ENCODE measurements at regions of chr5 and their contacts with region 1.

Region 1: GRCh38 chr5:126776497-126777256 is at the start of gene LMNB1:
- DNase-seq: peak; percentile 96
- ATAC-seq: peak; percentile 73
- H3K4me3 ChIP-seq: peak within 1 kb of the TSS; percentile 74 to 96 (median 81)
- H3K4me3 Mint-ChIP-seq: peak within 1 kb of the TSS; percentile 92
- H3K27ac ChIP-seq: peak within 1 kb of the TSS; percentile 93 to 97
- H3K27ac Mint-ChIP-seq: peak within 1 kb of the TSS; percentile 99
- H3K4me1 ChIP-seq: peaks cover 19 to 32% of the 10 kb centered on the region in 2 donors
- H3K4me1 Mint-ChIP-seq: peaks cover 29% of the 10 kb centered on the region
- H3K27me3 ChIP-seq: no peaks in the 10 kb centered on the region
- H3K27me3 Mint-ChIP-seq: no peaks in the 10 kb centered on the region
- CTCF ChIP-seq: peak; percentile 6
- total RNA-seq, gene LMNB1: 25.1 and 27.7 TPM in 2 replicates

Region 2: GRCh38 chr5:126600631-126601511 is 175.8 kb before region 1 on chr5 and contains the start of gene PHAX:
- CTCF ChIA-PET with region 1: interaction called, 5 read pairs
- POLR2A ChIA-PET with region 1: no interaction called
- intact Hi-C with region 1: loop called (anchors 2 kb)
- DNase-seq: peak; percentile 86
- ATAC-seq: peak; percentile 93
- H3K4me3 ChIP-seq: peak within 1 kb of the TSS; percentile 69 to 93 (median 86)
- H3K4me3 Mint-ChIP-seq: peak within 1 kb of the TSS; percentile 99
- H3K27ac ChIP-seq: peak within 1 kb of the TSS; percentile 50 to 71
- H3K27ac Mint-ChIP-seq: peak within 1 kb of the TSS; percentile 97
- H3K4me1 ChIP-seq: peaks cover 16 to 17% of the 10 kb centered on the region in 2 donors
- H3K4me1 Mint-ChIP-seq: peaks cover 29% of the 10 kb centered on the region
- H3K27me3 ChIP-seq: no peaks in the 10 kb centered on the region
- H3K27me3 Mint-ChIP-seq: no peaks in the 10 kb centered on the region
- CTCF ChIP-seq: peak; percentile 80
- total RNA-seq, gene PHAX: 42.7 and 43.9 TPM in 2 replicates

Region 3: GRCh38 chr5:126745259-126745992 is 31.3 kb before region 1 on chr5:
- CTCF ChIA-PET with region 1: interaction called, 10 read pairs
- POLR2A ChIA-PET with region 1: no interaction called
- intact Hi-C with region 1: loop called (anchors 1 kb)
- DNase-seq: no peak
- ATAC-seq: no peak
- H3K4me3 ChIP-seq: no peak overlapping the region
- H3K4me3 Mint-ChIP-seq: no peak overlapping the region
- H3K27ac ChIP-seq: no peak overlapping the region
- H3K27ac Mint-ChIP-seq: no peak overlapping the region
- H3K4me1 ChIP-seq: peaks cover 11 to 14% of the 10 kb centered on the region in 2 donors
- H3K4me1 Mint-ChIP-seq: peaks cover 15% of the 10 kb centered on the region
- H3K27me3 ChIP-seq: no peaks in the 10 kb centered on the region
- H3K27me3 Mint-ChIP-seq: no peaks in the 10 kb centered on the region
- CTCF ChIP-seq: no peak

Region 4: GRCh38 chr5:126801992-126802294 is 25.3 kb after region 1 on chr5:
- CTCF ChIA-PET with region 1: interaction called, 49 read pairs
- POLR2A ChIA-PET with region 1: interaction called, 3 read pairs
- intact Hi-C with region 1: no loop called
- DNase-seq: peak; percentile 48
- ATAC-seq: no peak
- H3K4me3 ChIP-seq: no peak overlapping the region
- H3K4me3 Mint-ChIP-seq: no peak overlapping the region
- H3K27ac ChIP-seq: no peak overlapping the region
- H3K27ac Mint-ChIP-seq: no peak overlapping the region
- H3K4me1 ChIP-seq: peaks cover 0 to 3% of the 10 kb centered on the region in 2 donors
- H3K4me1 Mint-ChIP-seq: peaks cover 34% of the 10 kb centered on the region
- H3K27me3 ChIP-seq: no peaks in the 10 kb centered on the region
- H3K27me3 Mint-ChIP-seq: no peaks in the 10 kb centered on the region
- CTCF ChIP-seq: peak; percentile 69

Region 5: DNA sequence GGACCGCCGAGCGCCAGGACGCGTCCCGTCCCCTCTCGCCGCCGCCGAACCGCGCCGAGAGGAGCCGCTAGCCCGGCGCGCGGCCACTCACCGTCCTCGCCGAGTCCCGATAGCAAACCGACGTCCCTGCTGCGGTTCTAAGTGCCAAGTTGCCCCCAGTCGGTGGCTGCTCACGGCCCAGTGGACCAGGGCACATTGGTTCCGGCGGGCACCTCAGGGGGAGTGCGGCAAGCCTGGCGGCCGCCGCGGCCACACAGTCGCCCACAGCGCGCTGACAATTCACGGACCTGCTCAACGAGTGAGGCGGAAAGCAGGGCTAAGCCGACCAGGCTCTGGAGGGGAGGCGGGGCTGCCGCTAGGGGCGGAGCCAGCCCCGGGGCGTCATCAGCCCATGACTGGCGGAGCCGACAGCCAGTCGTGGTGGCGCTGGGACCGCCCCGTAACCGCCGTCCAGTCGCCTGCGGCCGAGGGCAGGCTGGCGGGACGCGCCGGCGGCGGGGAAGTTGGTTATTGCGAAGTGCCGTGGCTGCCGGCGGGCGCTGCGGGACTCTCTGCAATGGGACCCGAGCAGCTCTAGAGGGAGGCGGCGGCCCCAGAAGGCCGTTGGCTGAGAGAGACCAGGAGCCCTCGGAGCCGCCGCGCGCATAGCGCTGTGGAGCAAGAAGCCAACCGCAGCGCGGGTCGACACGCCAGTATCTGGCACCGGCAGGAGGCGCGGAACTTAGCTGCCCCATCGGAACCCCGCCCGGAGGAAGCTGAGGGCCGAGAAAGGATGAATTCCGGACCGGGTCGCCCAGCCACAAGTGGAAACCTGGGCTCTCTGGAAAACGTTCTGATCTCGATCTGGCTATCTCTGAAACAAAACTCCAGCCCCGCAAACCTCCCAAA is 253.8 kb after region 1 on chr5 and contains the start of gene MARCHF3:
- CTCF ChIA-PET with region 1: no interaction called
- POLR2A ChIA-PET with region 1: interaction called, 6 read pairs
- intact Hi-C with region 1: loop called (anchors 1 kb)
- DNase-seq: peak; percentile 97
- ATAC-seq: peak; percentile 91
- H3K4me3 ChIP-seq: peak within 1 kb of the TSS; percentile 82 to 96 (median 88)
- H3K4me3 Mint-ChIP-seq: peak within 1 kb of the TSS; percentile 97
- H3K27ac ChIP-seq: peak within 1 kb of the TSS; percentile 65 to 89
- H3K27ac Mint-ChIP-seq: peak within 1 kb of the TSS; percentile 96
- H3K4me1 ChIP-seq: peaks cover 25 to 35% of the 10 kb centered on the region in 2 donors
- H3K4me1 Mint-ChIP-seq: peaks cover 45% of the 10 kb centered on the region
- H3K27me3 ChIP-seq: no peaks in the 10 kb centered on the region
- H3K27me3 Mint-ChIP-seq: no peaks in the 10 kb centered on the region
- CTCF ChIP-seq: peak; percentile 36
- total RNA-seq, gene MARCHF3: 35.0 and 42.2 TPM in 2 replicates

Region 6: GRCh38 chr5:127097278-127097677 is 320.6 kb after region 1 on chr5:
- CTCF ChIA-PET with region 1: no interaction called
- POLR2A ChIA-PET with region 1: no interaction called
- intact Hi-C with region 1: no loop called
- DNase-seq: no peak
- ATAC-seq: no peak
- H3K4me3 ChIP-seq: no peak overlapping the region
- H3K4me3 Mint-ChIP-seq: no peak overlapping the region
- H3K27ac ChIP-seq: no peak overlapping the region
- H3K27ac Mint-ChIP-seq: no peak overlapping the region
- H3K4me1 ChIP-seq: no peaks in the 10 kb centered on the region
- H3K4me1 Mint-ChIP-seq: no peaks in the 10 kb centered on the region
- H3K27me3 ChIP-seq: no peaks in the 10 kb centered on the region
- H3K27me3 Mint-ChIP-seq: peaks cover 7% of the 10 kb centered on the region
- CTCF ChIP-seq: no peak

Region 7: DNA sequence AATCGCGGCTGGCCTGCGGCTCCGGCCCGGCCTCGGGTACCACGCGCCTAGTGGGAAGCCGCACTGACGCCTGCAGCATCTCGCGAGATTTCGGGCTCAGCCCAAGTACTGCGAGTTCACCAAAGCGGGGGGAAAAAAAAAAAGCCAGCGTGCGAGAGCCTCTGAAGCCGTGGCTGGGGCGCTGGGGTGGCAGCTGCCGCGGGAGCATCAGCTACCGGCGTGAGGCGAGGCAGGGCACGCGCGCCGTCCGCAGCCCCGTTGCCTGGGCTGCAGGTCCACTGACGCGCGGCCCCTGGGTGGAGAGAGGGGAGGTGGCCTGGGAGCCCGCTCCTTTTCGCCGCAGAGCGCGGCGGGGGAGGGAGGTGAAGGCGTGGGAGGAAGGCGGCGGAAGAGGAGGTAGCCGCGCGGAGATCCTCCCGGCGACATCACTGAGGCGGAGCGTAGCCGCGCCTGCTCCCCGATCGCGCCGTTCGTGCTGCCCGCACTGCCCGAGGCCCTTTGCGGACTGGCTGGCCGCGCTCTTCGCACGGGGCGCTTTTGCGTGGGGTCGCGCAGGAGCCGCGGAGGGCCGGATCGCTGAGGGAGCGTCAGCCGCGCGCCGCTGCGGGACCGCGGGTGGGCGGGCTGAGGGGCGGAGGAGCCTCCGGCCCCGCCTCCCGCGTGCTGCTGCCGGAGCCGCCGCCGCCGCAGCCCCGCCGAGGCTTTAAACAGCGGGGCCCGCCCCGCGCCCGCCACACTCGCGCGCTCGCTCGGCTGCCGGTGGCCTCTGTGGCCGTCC is 1306.5 kb after region 1 on chr5 and contains the start of gene SLC12A2:
- CTCF ChIA-PET with region 1: no interaction called
- POLR2A ChIA-PET with region 1: no interaction called
- intact Hi-C with region 1: loop called (anchors 5 kb)
- DNase-seq: peak; percentile 98
- ATAC-seq: peak; percentile 71
- H3K4me3 ChIP-seq: peak within 1 kb of the TSS; percentile 79 to 89 (median 85)
- H3K4me3 Mint-ChIP-seq: peak within 1 kb of the TSS; percentile 95
- H3K27ac ChIP-seq: peak within 1 kb of the TSS; percentile 85 to 91
- H3K27ac Mint-ChIP-seq: peak within 1 kb of the TSS; percentile 95
- H3K4me1 ChIP-seq: peaks cover 42 to 49% of the 10 kb centered on the region in 2 donors
- H3K4me1 Mint-ChIP-seq: peaks cover 71% of the 10 kb centered on the region
- H3K27me3 ChIP-seq: no peaks in the 10 kb centered on the region
- H3K27me3 Mint-ChIP-seq: no peaks in the 10 kb centered on the region
- CTCF ChIP-seq: no peak
- total RNA-seq, gene SLC12A2: 27.4 and 28.7 TPM in 2 replicates